ENCODE measurements at regions of chr5 and their contacts with region 1.

Region 1: DNA sequence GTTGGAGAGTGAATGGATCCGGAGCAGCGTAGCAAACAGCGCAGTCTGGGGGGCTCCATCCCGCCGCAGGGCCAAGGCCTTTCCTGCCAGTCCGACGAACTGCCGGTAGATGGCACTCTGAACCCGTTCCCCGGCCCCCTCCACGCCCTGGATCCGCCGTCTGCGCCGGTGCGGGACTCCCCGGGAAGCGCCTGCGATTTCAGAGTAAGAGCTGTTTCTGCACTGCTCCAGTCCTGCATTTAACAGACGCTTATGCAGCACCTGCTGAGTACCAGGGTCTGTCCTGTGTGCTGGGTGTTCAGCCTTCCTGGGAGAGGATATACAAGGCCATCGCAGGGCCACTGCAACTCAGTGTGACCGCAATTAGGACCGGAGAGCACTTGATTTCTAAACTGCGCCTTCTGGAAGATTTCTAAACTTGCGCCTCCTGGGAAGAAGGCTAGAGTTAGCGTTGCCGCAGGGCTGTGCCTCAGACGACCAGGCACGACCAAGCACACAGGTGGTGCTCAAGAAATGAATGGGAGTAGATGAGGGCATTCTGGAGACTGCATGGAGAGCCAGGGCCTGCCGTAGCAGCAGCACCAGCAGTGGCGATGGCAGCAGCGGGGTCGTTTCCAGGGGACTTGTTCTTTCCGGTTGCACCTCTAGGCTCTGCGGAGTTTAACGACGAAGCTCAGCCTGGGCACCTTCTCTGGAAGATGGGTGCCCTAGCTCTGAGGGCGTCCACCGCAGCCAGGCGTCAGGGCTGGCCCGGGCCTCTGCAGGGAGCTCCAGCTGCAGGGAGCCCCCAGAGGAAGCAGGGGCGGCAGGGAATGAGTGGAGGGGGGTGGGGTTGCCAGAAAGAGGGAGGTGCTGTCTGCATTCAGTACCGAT is 14.3 kb upstream of the TIFAB start:
- DNase-seq: peak; percentile 30 to 77 (median 64)
- ATAC-seq: peak; percentile 81
- H3K4me3 ChIP-seq: peak overlapping the region in 1 of 2 experiments; percentile 33
- H3K4me3 Mint-ChIP-seq: peak overlapping the region; percentile 66
- H3K27ac ChIP-seq: no peak overlapping the region
- H3K27ac Mint-ChIP-seq: no peak overlapping the region
- H3K4me1 ChIP-seq: no peaks in the 10 kb centered on the region
- H3K4me1 Mint-ChIP-seq: peaks cover 8% of the 10 kb centered on the region
- H3K27me3 ChIP-seq: peaks cover 5 to 11% of the 10 kb centered on the region in 2 experiments
- H3K27me3 Mint-ChIP-seq: peaks cover 40% of the 10 kb centered on the region
- CTCF ChIP-seq: peak; percentile 62

Region 2: DNA sequence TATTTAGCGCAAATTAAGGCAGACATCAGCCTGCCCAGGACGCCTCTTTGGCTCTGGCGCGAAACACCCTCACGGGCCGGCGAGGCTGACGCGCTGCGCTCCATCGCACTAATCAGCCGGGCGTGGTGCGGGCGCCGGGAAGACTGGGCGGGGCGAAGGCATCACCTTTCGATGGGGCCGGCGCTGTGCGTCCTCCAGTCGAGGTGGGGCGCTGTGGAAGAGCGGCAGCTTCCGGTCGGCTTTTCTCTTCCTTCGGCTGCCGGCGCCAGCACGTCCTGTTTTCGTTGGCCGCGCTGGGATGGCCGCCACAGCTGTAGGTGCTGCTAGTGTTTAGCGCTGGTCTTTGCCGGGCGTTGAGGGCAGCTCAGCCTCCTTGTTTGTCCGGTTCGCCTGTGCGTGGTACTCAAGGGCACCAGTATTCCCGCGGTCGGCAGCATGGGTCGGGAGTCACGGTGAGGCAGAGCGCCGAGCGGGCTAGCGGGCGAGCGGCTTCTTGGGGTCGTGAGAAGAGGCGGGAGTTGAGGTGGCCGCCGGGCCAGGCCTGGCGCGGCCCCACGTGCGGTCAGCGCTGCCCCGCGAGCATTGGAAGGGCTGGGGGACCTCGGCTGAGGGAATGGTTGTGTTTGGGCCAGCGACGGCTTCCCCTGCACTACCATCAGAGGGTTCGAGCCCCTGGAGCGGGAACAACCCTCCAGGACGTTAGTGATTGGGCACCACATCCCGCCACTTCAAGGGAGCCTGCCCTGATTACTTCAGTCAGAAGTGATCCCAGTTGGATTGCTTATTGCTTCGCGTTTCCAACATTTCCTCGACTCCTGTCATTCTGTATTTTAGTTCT is 707.7 kb before region 1 on chr5 and contains the start of gene DDX46:
- CTCF ChIA-PET with region 1: no interaction called
- POLR2A ChIA-PET with region 1: no interaction called
- intact Hi-C with region 1: no loop called
- DNase-seq: peak; percentile 87 to 95 (median 94)
- ATAC-seq: peak; percentile 99
- H3K4me3 ChIP-seq: peak within 1 kb of the TSS; percentile 85 to 88
- H3K4me3 Mint-ChIP-seq: peak within 1 kb of the TSS; percentile 99
- H3K27ac ChIP-seq: peak within 1 kb of the TSS; percentile 76 to 78
- H3K27ac Mint-ChIP-seq: peak within 1 kb of the TSS; percentile 97
- H3K4me1 ChIP-seq: peaks cover 18% of the 10 kb centered on the region
- H3K4me1 Mint-ChIP-seq: peaks cover 36% of the 10 kb centered on the region
- H3K27me3 ChIP-seq: no peaks in the 10 kb centered on the region
- H3K27me3 Mint-ChIP-seq: no peaks in the 10 kb centered on the region
- CTCF ChIP-seq: peak; percentile 75
- total RNA-seq, gene DDX46: 35.1 to 40.4 TPM

Region 3: GRCh38 chr5:134798468-134798867 is 667.9 kb before region 1 on chr5:
- CTCF ChIA-PET with region 1: no interaction called
- POLR2A ChIA-PET with region 1: no interaction called
- intact Hi-C with region 1: no loop called
- DNase-seq: no peak
- ATAC-seq: no peak
- H3K4me3 ChIP-seq: no peak overlapping the region
- H3K4me3 Mint-ChIP-seq: no peak overlapping the region
- H3K27ac ChIP-seq: no peak overlapping the region
- H3K27ac Mint-ChIP-seq: no peak overlapping the region
- H3K4me1 ChIP-seq: no peaks in the 10 kb centered on the region
- H3K4me1 Mint-ChIP-seq: no peaks in the 10 kb centered on the region
- H3K27me3 ChIP-seq: no peaks in the 10 kb centered on the region
- H3K27me3 Mint-ChIP-seq: no peaks in the 10 kb centered on the region
- CTCF ChIP-seq: no peak

Region 4: DNA sequence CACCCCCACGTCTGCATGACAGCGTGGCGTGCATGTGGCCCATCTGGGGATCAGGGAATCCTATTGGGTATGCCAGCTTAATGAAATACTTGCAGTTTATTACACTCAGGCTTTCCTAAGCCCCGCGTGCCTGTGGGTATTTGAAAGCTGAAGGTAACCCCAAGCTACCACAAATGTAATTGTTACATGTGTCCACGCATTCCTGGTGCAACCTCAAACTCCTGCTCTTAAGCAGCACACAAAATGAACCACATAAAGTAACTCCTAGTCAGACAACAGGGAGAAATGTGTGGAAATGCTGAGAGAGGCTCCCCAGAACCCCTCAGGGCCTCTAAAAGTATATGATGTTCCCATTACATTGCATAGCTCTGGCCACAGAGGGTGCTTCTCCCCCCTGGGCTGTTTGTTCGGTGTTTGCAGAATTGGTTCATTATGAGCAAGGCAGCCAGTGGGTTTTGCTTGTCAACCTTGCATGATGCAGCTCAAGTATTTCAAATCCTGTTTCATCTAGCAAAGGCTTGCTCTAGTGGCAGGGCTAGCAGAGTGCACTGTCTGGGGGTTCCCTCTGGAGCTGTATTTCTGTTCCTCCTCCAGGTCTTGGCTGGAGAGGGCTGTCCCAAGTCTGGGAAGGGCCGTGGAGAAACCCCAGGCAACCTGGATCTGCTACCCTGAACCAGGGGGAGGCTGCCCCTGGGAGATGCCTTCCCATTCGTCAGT is 17.5 kb before region 1 on chr5:
- CTCF ChIA-PET with region 1: interaction called, 14 read pairs
- POLR2A ChIA-PET with region 1: no interaction called
- intact Hi-C with region 1: no loop called
- DNase-seq: no peak
- ATAC-seq: no peak
- H3K4me3 ChIP-seq: no peak overlapping the region
- H3K4me3 Mint-ChIP-seq: no peak overlapping the region
- H3K27ac ChIP-seq: no peak overlapping the region
- H3K27ac Mint-ChIP-seq: no peak overlapping the region
- H3K4me1 ChIP-seq: no peaks in the 10 kb centered on the region
- H3K4me1 Mint-ChIP-seq: no peaks in the 10 kb centered on the region
- H3K27me3 ChIP-seq: no peaks in the 10 kb centered on the region
- H3K27me3 Mint-ChIP-seq: no peaks in the 10 kb centered on the region
- CTCF ChIP-seq: no peak

Region 5: DNA sequence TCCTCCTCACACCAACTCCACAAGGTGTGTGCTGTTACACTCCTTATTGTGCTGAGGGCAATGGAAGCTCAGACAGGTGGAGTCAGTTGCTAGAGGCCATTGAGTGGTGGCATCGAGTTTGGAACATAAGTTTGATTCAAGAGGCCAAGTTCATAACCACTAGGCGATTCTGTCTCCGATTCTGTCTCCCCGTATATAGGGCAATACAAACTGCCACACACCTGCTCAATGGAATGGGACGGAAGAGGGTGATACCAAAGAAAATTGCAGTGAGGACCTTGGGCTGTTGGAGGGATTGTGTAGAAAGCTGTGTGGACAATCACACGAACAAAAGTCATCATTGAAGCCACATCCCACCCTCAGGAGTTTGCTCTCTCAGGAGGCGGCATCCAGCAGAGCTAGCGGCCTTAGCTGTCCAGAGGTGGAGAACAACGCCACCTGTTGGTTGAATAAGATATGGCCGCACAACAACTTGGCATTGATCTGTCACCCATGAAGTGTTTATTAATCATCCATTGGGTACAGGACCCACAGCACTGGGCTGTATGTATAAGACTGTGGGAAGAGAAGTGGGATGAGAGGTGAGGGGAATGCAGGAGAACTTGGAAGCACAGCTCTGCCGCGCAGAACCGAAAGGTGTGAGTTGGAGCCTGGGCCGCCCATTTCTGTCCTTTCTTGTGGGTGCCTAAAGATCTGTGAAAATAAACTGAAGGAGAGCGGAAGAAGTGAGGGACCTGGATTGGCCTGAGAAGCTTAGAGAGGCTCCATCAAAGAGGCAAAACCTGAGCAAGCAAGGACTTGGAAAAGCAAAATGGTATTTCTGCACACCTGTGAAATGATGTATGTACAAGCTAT is 85.4 kb after region 1 on chr5:
- CTCF ChIA-PET with region 1: interaction called, 89 read pairs
- POLR2A ChIA-PET with region 1: no interaction called
- intact Hi-C with region 1: loop called (anchors 1 to 2 kb)
- DNase-seq: peak; percentile 8 to 61 (median 40)
- ATAC-seq: peak; percentile 51
- H3K4me3 ChIP-seq: no peak overlapping the region
- H3K4me3 Mint-ChIP-seq: no peak overlapping the region
- H3K27ac ChIP-seq: no peak overlapping the region
- H3K27ac Mint-ChIP-seq: no peak overlapping the region
- H3K4me1 ChIP-seq: no peaks in the 10 kb centered on the region
- H3K4me1 Mint-ChIP-seq: no peaks in the 10 kb centered on the region
- H3K27me3 ChIP-seq: no peaks in the 10 kb centered on the region
- H3K27me3 Mint-ChIP-seq: peaks cover 67% of the 10 kb centered on the region
- CTCF ChIP-seq: peak; percentile 65

Region 6: DNA sequence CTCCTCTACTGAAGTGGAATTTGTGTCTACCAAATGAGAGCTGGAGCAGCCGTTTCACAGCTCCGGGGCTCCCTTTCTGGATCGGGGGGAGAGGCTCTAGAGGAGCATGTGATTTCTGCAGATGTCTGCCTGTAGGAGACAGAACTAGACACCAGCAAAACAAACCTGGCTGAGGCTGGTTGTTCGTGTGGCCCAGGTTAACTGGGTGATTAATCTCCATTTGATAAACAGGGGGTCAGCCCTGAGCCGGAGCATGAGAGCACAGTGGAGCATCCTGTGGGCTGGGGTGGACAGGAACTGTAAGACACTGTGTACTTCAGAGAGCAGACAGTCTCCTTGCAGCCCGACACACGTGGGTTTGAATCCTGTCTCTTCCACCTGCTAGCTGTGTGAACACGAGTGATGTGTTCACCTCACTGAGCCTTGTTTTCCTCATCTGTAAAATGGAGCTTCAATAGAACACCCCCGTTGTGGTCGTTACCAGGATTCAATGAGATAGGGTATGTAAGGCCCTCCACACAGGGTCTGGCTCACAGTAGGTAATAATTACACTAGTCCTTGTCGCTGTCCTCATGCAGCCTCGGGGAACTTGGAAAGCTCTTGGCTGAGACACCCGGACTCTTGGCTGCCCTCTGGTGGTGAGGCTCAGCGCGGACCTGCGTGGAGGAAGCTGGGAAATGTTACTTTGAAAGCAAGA is 99.5 kb after region 1 on chr5:
- CTCF ChIA-PET with region 1: interaction called, 92 read pairs
- POLR2A ChIA-PET with region 1: no interaction called
- intact Hi-C with region 1: loop called (anchors 1 kb)
- DNase-seq: peak; percentile 32 to 70 (median 61)
- ATAC-seq: peak; percentile 46
- H3K4me3 ChIP-seq: no peak overlapping the region
- H3K4me3 Mint-ChIP-seq: no peak overlapping the region
- H3K27ac ChIP-seq: no peak overlapping the region
- H3K27ac Mint-ChIP-seq: no peak overlapping the region
- H3K4me1 ChIP-seq: no peaks in the 10 kb centered on the region
- H3K4me1 Mint-ChIP-seq: peaks cover 1% of the 10 kb centered on the region
- H3K27me3 ChIP-seq: no peaks in the 10 kb centered on the region
- H3K27me3 Mint-ChIP-seq: peaks cover 3% of the 10 kb centered on the region
- CTCF ChIP-seq: peak; percentile 52

Region 7: GRCh38 chr5:136212252-136212721 is 745.9 kb after region 1 on chr5:
- CTCF ChIA-PET with region 1: no interaction called
- POLR2A ChIA-PET with region 1: no interaction called
- intact Hi-C with region 1: loop called in 1 of 2 experiments (anchors 5 kb)
- DNase-seq: peak in 8 of 9 experiments; percentile 11 to 65 (median 48)
- ATAC-seq: no peak
- H3K4me3 ChIP-seq: no peak overlapping the region
- H3K4me3 Mint-ChIP-seq: no peak overlapping the region
- H3K27ac ChIP-seq: no peak overlapping the region
- H3K27ac Mint-ChIP-seq: no peak overlapping the region
- H3K4me1 ChIP-seq: no peaks in the 10 kb centered on the region
- H3K4me1 Mint-ChIP-seq: no peaks in the 10 kb centered on the region
- H3K27me3 ChIP-seq: no peaks in the 10 kb centered on the region
- H3K27me3 Mint-ChIP-seq: peaks cover 13% of the 10 kb centered on the region
- CTCF ChIP-seq: peak; percentile 66